K562 (cell line): ENCODE measurements at regions of chr2 and their contacts with region 1.

Region 1: GRCh38 chr2:43178602-43179542 is 47.5 kb downstream of the ZFP36L2 start:
- DNase-seq: peak; percentile 81 to 97 (median 86)
- ATAC-seq: peak; percentile 86
- H3K4me3 ChIP-seq: peak overlapping the region; percentile 1; the same call in 1 of the 2 replicates
- H3K27ac ChIP-seq: peak overlapping the region; percentile 94
- H3K4me1 ChIP-seq: peaks cover 59 to 71% of the 10 kb centered on the region in 2 experiments
- H3K27me3 ChIP-seq: no peaks in the 10 kb centered on the region
- CTCF ChIP-seq: no peak
- EP300 ChIP-seq: peak; percentile 93
- POLR2A ChIP-seq: peak; percentile 56
- RAD21 ChIP-seq: peak; percentile 38 to 40

Region 2: DNA sequence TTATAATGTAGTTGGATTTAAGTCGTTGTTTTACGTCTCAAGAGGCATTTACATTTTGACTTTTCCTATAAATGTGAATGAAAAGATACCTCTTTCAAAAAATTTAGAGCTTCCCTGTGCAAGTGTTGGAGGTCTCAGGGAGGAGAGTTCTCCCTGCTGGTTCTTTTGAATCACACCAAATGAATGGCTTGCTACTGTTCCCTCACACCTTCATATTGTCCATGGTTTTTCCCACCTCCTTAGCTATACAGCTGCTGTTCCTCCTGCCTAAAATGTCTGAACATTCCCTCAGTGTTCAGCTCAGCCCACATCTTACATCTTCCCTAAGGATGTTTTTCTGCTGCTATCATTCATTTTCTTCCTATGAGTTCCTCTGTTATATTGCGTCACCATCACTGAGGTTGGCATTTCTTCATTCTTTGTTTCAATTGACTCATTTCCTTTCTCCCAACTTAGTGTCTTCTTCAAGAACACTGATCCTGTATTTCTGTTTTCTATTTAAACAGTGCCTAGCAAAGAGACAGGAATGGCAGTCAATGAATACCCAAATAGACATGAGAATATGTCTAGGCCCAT is 863.9 kb before region 1 on chr2:
- CTCF ChIA-PET with region 1: no interaction called
- POLR2A ChIA-PET with region 1: no interaction called
- in situ Hi-C with region 1: no loop called
- intact Hi-C with region 1: no loop called
- DNase-seq: no peak
- ATAC-seq: no peak
- H3K4me3 ChIP-seq: no peak overlapping the region
- H3K27ac ChIP-seq: no peak overlapping the region
- H3K4me1 ChIP-seq: no peaks in the 10 kb centered on the region
- H3K27me3 ChIP-seq: no peaks in the 10 kb centered on the region
- CTCF ChIP-seq: no peak
- EP300 ChIP-seq: no peak
- POLR2A ChIP-seq: no peak
- RAD21 ChIP-seq: no peak

Region 3: GRCh38 chr2:43194121-43194869 is 15.4 kb after region 1 on chr2:
- CTCF ChIA-PET with region 1: no interaction called
- POLR2A ChIA-PET with region 1: interaction called, 6 read pairs
- in situ Hi-C with region 1: no loop called
- intact Hi-C with region 1: loop called (anchors 2 kb)
- DNase-seq: no peak
- ATAC-seq: peak; percentile 3; the same call in 2 of the 3 replicates
- H3K4me3 ChIP-seq: no peak overlapping the region
- H3K27ac ChIP-seq: peak overlapping the region; percentile 80
- H3K4me1 ChIP-seq: peaks cover 60 to 75% of the 10 kb centered on the region in 2 experiments
- H3K27me3 ChIP-seq: no peaks in the 10 kb centered on the region
- CTCF ChIP-seq: no peak
- EP300 ChIP-seq: no peak
- POLR2A ChIP-seq: no peak
- RAD21 ChIP-seq: no peak

Region 4: DNA sequence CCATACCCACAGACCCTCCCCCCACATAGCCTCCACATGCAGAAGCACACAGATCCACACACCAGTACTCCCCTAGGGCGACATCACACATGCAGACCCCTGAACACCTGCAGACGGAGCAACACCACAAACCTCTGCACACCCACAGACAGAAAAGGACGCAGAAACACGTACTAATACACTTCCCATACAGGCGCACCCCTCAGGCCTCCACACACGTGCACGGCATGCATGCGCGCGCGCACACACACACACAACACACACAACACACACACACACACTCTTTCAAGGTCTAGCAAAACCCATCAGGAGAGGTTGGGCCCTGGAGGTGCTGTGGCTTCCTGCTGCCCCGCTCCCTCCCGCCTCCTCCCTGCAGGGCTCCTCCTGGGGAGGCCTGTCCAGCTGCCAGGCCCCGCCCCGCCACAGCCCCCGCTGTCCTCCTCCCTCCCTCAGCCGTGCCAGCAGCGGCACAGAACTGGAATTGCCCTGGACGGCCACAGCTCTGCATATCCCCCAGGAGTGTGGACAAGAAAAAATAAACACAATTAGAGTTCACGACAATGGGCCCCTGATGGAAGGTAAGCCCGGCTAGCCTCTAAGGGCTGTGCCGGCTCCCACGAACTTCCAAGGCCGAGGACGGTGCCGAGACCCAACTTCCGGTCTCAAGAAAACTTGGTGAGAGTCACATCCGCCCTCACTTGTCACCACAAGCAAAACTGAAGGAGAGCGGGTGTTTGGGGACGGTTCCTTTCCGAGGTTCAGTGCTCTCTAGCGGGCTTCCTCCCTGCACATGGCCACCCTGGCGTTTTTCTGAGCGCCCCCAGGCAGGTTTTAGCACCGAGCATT is 40.7 kb after region 1 on chr2:
- CTCF ChIA-PET with region 1: no interaction called
- POLR2A ChIA-PET with region 1: interaction called, 8 read pairs
- in situ Hi-C with region 1: loop called (anchors 10 kb)
- intact Hi-C with region 1: loop called (anchors 2 kb)
- DNase-seq: peak; percentile 89 to 94 (median 91)
- ATAC-seq: peak; percentile 84
- H3K4me3 ChIP-seq: peak overlapping the region; percentile 62
- H3K27ac ChIP-seq: peak overlapping the region; percentile 86
- H3K4me1 ChIP-seq: peaks cover 19 to 49% of the 10 kb centered on the region in 2 experiments; a peak in 4 of 5 replicates
- H3K27me3 ChIP-seq: no peaks in the 10 kb centered on the region
- CTCF ChIP-seq: 0 out of 6 replicates have a peak, but pooled peaks of 2 of the 3 experiments have one; percentile 7 to 10
- EP300 ChIP-seq: no peak
- POLR2A ChIP-seq: peak; percentile 86
- RAD21 ChIP-seq: peak; percentile 2 to 16; a peak in 2 of 4 replicates

Region 5: DNA sequence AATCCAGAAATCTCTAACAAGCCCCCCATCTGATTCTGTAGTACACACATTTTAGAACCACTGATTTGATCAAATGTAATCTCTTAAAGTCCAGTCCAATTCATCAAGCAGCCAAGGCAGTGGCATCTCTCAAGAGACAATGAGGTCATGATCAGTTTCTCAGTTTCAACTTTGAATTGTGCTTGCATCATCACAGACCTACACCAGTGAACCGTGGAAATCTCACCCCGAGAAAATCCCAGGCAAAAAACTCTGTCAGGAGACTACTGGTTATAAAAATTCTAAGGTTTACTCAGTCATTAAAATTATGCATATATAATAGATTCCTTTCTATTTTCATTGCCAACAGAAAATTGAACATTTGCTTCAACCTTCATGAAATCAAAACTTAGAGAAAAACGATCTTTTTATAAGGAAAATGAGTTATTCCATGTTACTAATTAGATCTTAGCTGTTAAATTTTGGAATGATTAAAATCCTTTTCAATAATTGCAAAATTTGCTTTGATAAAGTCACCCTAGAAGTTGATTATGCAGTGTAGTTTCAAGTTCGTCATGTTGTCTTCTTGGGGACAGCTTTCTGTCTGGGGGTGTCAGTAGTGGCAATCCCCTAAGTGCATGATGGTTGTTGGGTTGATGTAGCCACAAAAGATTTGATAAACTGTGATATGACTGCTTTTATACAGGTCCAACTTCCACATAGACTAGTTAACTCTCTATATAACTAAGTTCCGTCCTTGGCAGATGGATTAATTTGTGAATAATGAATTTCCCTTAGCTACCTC is 1417.9 kb after region 1 on chr2:
- CTCF ChIA-PET with region 1: no interaction called
- POLR2A ChIA-PET with region 1: no interaction called
- in situ Hi-C with region 1: no loop called
- intact Hi-C with region 1: no loop called
- DNase-seq: no peak
- ATAC-seq: no peak
- H3K4me3 ChIP-seq: no peak overlapping the region
- H3K27ac ChIP-seq: no peak overlapping the region
- H3K4me1 ChIP-seq: no peaks in the 10 kb centered on the region
- H3K27me3 ChIP-seq: no peaks in the 10 kb centered on the region
- CTCF ChIP-seq: no peak
- EP300 ChIP-seq: no peak
- POLR2A ChIP-seq: no peak
- RAD21 ChIP-seq: no peak